ENCODE measurements at regions of chr6 and their contacts with region 1.

Region 1: DNA sequence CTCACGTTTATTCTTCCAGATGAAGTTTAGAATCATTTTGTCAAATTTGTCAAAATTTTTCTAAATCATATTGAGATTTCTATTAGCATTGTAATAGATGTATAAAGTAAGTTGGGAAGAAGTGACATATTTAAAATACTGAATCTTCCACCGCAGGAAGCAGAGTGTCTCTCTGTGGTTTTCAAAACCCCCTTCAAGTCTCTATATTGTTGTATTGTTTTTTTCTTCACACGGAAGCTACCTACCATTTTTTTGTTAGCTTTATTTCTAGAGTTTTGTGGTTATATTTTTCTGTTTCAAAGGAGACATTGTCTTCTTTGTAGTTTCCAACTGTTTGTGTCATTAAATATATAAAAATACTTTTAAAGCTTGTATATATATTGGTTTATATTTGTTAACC is 188.6 kb downstream of the ZDHHC14 start:
- DNase-seq: no peak
- H3K4me3 Mint-ChIP-seq: peak overlapping the region; percentile 47
- H3K27ac Mint-ChIP-seq: peak overlapping the region; percentile 4
- H3K4me1 Mint-ChIP-seq: peaks cover 24% of the 10 kb centered on the region
- H3K27me3 Mint-ChIP-seq: peaks cover 14% of the 10 kb centered on the region

Region 2: DNA sequence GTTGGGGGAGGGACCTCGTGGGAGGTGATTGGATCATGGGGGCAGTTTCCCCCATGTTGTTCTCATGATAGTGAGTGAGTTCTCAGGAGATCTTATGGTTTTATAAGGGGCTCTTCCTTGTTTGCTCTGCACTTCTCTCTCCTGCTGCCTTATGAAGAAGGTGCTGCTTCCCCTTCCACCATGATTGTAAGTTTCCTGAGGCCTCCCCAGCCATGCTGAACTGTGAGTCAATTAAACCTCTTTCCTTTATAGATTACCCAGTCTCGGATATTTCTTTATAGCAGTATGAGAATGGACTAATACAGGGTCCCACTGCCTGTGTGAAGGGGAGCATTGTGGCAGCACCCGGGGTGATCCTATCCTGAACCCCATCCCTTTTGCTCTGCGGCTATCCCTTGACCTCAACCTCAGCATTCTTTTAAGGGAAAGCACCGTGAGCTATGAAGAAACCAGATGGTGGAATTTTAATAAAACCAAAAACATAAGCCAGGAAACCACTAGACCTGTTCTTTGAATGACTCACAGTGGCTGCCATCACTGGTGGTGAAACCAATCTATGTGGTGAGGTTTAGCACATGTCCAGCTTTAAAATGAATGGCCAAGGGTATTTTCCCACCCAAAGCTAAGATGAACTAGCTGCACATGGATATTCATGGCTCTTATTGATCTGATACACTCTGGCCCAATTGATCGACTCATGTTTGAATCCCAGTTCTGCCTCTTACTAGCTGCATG is 126.3 kb before region 1 on chr6:
- intact Hi-C with region 1: loop called (anchors 5 kb)
- DNase-seq: no peak
- H3K4me3 Mint-ChIP-seq: peak overlapping the region; percentile 43
- H3K27ac Mint-ChIP-seq: peak overlapping the region; percentile 85
- H3K4me1 Mint-ChIP-seq: peaks cover 30% of the 10 kb centered on the region
- H3K27me3 Mint-ChIP-seq: peaks cover 3% of the 10 kb centered on the region

Region 3: GRCh38 chr6:157558049-157558448 is 11.5 kb before region 1 on chr6:
- intact Hi-C with region 1: loop called (anchors 1 kb)
- DNase-seq: no peak
- H3K4me3 Mint-ChIP-seq: no peak overlapping the region
- H3K27ac Mint-ChIP-seq: peak overlapping the region; percentile 66
- H3K4me1 Mint-ChIP-seq: peaks cover 53% of the 10 kb centered on the region
- H3K27me3 Mint-ChIP-seq: peaks cover 12% of the 10 kb centered on the region